Cardiac septum (tissue), 1 donor: ENCODE measurements at regions of chr16 and their contacts with region 1.

Region 1: DNA sequence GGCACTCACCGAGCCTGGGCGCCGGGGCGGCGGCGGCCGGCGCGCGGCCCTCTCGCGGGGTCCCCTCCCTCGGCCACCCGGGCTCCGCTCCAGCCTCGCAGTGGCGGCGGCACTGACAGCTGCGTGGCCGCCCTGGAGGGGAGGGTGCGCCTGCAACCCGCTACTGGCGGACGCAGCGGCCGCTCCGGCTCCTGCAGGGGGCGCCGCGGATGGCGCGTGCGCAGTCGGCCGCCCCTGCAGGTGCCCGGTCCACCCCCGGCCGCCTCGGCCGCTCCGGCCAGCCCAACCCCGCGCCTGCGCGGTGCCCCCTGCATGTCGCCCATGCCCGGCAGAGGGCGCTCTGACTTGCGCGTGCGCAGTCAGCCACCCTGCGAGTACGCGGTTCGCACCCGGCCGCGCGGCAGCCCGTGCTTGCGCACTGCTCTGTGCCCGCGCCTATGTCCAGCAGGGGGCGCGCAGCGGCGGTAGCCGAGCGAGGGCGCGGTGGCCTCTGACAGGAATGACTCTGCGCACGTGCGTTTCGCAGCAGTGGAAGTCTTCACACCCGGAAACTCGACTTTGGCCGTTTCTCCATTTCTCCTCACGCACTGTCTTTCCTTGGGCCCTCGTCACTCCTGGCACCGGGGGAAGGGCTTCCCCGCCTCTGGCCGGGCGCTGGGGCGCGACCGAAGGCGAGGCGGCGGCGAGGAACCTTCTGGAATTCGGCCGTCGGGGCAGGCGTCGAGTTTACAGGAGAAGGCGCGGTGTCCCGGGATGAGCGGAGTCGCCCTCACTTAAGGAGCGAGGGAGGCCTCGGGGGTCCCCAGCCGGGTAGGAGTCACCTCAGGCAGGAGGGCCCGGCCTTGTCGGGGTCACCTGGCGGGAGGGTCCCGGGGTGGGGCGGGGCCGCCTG is at the start of gene ABCA3:
- DNase-seq: peak; percentile 96
- total RNA-seq, gene ABCA3: 13.6 TPM

Region 2: DNA sequence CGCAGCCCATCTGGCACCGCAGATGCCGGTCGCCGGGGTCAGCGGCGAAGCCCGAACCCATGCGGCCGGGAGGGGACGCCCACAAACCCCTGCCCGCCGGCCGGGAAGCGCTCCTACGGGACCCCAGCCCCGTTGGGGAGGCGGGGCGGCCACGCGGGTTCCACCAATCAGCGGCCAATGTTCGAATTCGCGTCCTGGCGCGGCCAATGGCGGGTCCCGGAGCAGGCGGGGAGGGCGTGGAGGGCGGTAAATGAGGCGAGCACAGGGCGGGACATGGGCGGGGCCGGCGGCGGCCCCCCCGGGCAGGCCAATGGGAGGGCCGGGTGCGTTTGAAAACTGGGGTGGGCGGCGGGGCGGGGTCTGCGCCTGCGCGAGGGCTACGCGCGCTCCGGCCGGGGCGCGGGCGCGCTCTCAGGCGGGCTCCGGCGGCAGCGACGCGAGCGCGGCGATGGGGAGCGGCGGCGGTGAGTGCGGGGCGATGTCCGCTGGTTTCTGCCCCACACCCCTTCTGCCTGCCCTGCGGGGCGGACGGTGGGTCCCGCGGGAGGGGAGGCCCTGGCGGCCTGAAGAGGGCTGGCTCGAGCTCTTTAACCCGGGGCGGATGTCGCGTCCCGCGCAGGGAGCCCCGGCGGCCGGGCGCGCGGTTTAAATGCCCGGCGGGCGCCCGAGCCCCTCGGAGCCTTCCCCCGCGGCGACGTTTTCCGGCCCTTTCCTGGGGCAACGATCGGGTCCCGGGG is 88.4 kb after region 1 on chr16 and contains the start of gene CCNF:
- intact Hi-C with region 1: loop called (anchors 2 kb)
- DNase-seq: peak; percentile 99
- total RNA-seq, gene CCNF: 0.86 TPM

Region 3: GRCh38 chr16:2486645-2487516 is 146.1 kb after region 1 on chr16:
- intact Hi-C with region 1: loop called (anchors 10 kb)
- DNase-seq: no peak

Region 4: DNA sequence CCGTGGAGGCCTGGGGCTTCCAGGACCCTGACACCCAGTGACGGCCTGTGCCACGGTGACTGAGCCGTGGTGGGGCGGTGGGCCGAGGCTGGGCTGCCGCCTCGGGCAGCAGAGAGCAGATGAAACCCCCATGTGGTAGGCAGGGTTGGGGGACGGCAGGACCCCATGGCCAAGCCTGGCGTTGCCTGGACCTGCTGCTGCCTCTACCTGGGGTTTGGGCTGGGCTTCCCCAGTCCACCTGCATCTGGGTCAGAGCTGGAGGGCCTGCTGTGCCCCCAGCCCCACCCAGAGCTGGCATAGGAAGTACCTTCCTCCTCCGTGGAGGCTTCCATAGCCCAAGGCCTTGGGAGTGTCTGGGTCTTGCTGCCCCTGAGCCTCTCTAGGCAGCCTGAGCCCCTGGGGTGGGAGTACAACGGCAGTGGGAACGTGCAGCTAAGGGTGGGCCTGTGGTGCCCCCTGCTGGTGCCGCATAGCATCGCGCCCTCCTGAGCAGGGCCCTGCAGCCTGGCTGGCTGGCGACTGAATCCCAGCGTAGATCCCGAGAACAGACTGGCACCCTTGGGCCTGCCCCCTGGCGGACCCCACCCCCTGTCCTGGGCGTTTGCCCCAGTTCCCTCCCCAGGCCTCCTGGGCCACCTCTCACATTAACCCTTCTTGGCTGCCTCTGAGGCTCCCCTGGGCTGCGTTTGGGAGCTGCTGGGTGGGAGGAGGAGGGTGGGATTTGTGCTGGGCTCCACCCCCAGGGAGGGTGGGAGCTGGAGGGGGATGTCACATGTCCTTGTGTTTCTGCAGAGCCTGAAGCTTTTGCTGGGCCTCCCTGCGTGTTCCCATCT is 160.3 kb after region 1 on chr16:
- intact Hi-C with region 1: loop called (anchors 2 kb)
- DNase-seq: peak; percentile 91